Sciatic nerve (tissue), 2 donors: ENCODE measurements at regions of chr5 and their contacts with region 1.

Region 1: GRCh38 chr5:149834246-149834855 is 104.2 kb downstream of the PPARGC1B start:
- DNase-seq: peak; percentile 69
- ATAC-seq: peak; percentile 53

Region 2: GRCh38 chr5:149990518-149991376 is 156.4 kb after region 1 on chr5:
- intact Hi-C with region 1: loop called (anchors 10 kb)
- DNase-seq: peak; percentile 81
- ATAC-seq: peak; percentile 81